ENCODE measurements at regions of chr14 and their contacts with region 1.

Region 1: DNA sequence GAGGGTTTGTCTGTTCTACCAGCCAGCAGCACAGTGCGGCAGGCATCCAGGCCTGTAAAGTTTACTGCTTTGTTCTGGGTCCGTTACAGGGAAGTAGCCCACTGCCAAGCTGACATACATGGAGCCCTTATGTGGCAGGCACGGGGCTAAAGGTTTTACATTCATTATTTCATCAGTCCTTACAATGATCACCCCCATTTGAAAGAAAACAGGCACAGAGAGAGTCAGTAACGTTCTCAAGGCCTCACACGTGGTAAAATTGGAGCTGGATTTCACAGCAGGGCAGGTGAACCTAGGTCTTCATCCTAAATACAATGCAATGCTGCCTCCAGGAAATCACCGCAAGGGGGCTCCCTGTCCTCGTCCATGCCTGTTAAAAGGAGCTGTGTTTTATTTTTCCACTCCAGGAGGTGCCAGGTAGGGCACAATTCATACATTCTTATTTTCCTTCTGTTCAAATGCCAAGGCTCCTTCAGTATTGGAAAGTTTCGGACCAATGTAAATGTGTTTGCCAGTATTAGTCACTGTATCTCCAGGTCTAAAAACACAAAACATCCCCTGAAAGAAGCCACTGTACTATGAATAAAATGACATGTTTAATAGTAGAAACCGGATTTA is 172.2 kb upstream of the GZMB start:
- DNase-seq: peak; percentile 16
- ATAC-seq: peak; percentile 89
- H3K4me3 ChIP-seq: no peak overlapping the region
- H3K27ac ChIP-seq: no peak overlapping the region
- H3K4me1 ChIP-seq: no peaks in the 10 kb centered on the region
- H3K27me3 ChIP-seq: no peaks in the 10 kb centered on the region
- CTCF ChIP-seq: peak; percentile 79 to 92 (median 82)
- EP300 ChIP-seq: no peak
- POLR2A ChIP-seq: no peak
- RAD21 ChIP-seq: peak; percentile 75

Region 2: DNA sequence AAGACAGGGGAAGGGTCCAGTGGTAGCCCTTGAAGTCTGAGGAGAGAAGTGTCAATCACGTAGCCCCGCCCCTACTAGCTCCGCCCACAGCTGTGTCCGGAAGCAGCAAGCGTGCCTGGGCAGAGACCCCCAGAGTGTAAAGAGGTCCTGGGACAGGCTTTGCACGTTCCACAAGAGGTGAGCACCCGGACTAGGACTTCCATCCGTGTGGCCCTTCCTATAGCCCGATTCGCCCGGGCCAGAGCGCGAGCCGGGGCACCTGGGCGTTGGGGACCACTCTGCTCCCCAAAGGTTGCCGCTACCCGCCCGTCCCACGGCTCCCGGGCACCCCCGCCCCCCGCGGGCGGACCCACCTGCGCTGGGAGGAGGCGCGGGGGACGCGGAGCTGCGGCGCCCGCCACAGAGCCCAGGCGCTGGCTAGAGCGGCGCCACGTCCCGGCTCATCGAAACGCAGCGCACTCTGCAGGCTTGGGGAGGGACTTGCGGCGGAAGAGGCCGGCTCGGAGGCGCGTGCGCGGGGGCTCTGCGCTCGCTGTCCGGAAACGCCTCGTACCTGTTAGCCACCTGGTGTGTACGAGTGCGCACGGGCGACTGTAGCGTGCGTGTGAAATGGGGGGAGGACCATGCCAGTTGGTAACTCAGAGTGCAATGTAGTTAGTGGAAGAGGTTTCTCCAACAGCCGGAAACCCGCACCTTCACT is 534.9 kb before region 1 on chr14 and contains the start of gene RABGGTA:
- CTCF ChIA-PET with region 1: no interaction called
- POLR2A ChIA-PET with region 1: no interaction called
- RAD21 ChIA-PET with region 1: no interaction called
- SMC1A ChIA-PET with region 1: no interaction called
- in situ Hi-C with region 1: no loop called
- intact Hi-C with region 1: no loop called
- DNase-seq: peak; percentile 80
- ATAC-seq: peak; percentile 89
- H3K4me3 ChIP-seq: peak within 1 kb of the TSS; percentile 88
- H3K27ac ChIP-seq: peak within 1 kb of the TSS; percentile 99
- H3K4me1 ChIP-seq: peaks cover 25% of the 10 kb centered on the region
- H3K27me3 ChIP-seq: no peaks in the 10 kb centered on the region
- CTCF ChIP-seq: peak; percentile 84 to 93 (median 86); a peak in 5 of 6 replicates
- EP300 ChIP-seq: no peak
- POLR2A ChIP-seq: peak; percentile 93
- RAD21 ChIP-seq: 0 out of 2 replicates have a peak, but pooled peaks have one; percentile 25
- polyA plus RNA-seq, gene RABGGTA: 38.2 to 38.6 TPM

Region 3: GRCh38 chr14:24398653-24399446 is 407.3 kb before region 1 on chr14 and contains the start of gene NYNRIN:
- CTCF ChIA-PET with region 1: no interaction called
- POLR2A ChIA-PET with region 1: no interaction called
- RAD21 ChIA-PET with region 1: no interaction called
- SMC1A ChIA-PET with region 1: no interaction called
- in situ Hi-C with region 1: no loop called
- intact Hi-C with region 1: no loop called
- DNase-seq: no peak
- ATAC-seq: peak; percentile 43
- H3K4me3 ChIP-seq: no peak within 1 kb of the TSS
- H3K27ac ChIP-seq: no peak within 1 kb of the TSS
- H3K4me1 ChIP-seq: no peaks in the 10 kb centered on the region
- H3K27me3 ChIP-seq: peaks cover 4 to 8% of the 10 kb centered on the region in 2 experiments
- CTCF ChIP-seq: no peak
- EP300 ChIP-seq: no peak
- POLR2A ChIP-seq: no peak
- RAD21 ChIP-seq: no peak
- polyA plus RNA-seq, gene NYNRIN: not detected

Region 4: DNA sequence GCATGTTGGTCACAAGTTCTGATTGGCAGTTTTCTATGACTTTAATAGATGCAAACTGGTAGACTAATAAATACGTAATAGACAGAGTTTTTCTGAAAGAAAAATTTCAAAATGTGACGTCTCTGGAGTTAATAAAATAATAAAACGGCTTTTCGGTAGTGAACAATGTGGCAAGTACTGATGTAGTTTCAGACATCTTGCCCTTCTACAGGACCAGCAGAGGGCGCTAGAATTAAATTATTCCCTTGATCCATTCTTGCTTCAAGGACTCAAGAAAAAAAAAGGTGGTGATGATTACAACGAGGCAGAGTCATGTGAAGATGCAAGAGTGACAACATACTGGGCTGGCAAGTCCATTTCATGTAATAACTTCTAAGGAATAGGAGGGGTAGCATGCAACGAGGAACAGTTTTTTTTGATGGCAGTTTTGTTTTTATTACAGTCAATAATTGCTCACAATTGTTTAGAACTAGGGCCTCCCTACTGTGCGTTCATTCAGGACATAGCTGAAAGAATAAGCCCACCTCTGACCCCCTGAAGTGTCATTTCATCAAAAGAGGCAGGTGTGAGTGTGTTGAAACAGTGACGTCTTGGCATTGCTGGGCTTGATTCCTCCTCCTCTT is 71.2 kb before region 1 on chr14:
- CTCF ChIA-PET with region 1: interaction called, 26 read pairs
- POLR2A ChIA-PET with region 1: no interaction called
- RAD21 ChIA-PET with region 1: interaction called, 17 read pairs
- SMC1A ChIA-PET with region 1: interaction called, 20 read pairs
- in situ Hi-C with region 1: no loop called
- intact Hi-C with region 1: loop called (anchors 5 kb)
- DNase-seq: no peak
- ATAC-seq: peak; percentile 93
- H3K4me3 ChIP-seq: no peak overlapping the region
- H3K27ac ChIP-seq: no peak overlapping the region
- H3K4me1 ChIP-seq: no peaks in the 10 kb centered on the region
- H3K27me3 ChIP-seq: no peaks in the 10 kb centered on the region
- CTCF ChIP-seq: peak; percentile 58 to 68 (median 67)
- EP300 ChIP-seq: no peak
- POLR2A ChIP-seq: no peak
- RAD21 ChIP-seq: peak; percentile 53

Region 5: DNA sequence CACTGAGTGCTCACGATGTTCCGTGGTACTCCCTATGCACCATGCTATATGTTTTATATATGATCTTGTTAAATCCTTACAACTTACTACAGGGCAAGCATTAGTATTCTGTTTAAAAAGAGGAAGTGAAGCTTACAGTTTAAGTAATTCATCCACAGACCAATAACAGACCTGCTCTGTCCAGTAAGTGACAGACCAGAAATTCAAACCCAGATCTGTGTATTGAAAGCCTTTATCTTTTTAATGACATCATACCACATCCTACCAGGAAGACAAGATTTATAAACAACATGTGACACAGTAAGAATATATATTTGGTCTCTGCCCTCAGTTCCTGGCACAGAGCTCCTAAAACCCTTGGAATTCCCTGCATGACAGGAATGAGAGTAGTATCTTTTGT is 37.3 kb after region 1 on chr14:
- CTCF ChIA-PET with region 1: interaction called, 5 read pairs
- POLR2A ChIA-PET with region 1: no interaction called
- RAD21 ChIA-PET with region 1: interaction called, 11 read pairs
- SMC1A ChIA-PET with region 1: interaction called, 19 read pairs
- in situ Hi-C with region 1: no loop called
- intact Hi-C with region 1: no loop called
- DNase-seq: peak; percentile 13
- ATAC-seq: peak; percentile 97
- H3K4me3 ChIP-seq: no peak overlapping the region
- H3K27ac ChIP-seq: no peak overlapping the region
- H3K4me1 ChIP-seq: no peaks in the 10 kb centered on the region
- H3K27me3 ChIP-seq: no peaks in the 10 kb centered on the region
- CTCF ChIP-seq: no peak
- EP300 ChIP-seq: peak; percentile 10 to 50; a peak in 2 of 4 replicates
- POLR2A ChIP-seq: no peak
- RAD21 ChIP-seq: no peak

Region 6: GRCh38 chr14:24952851-24953666 is 146.9 kb after region 1 on chr14:
- CTCF ChIA-PET with region 1: interaction called, 11 read pairs
- POLR2A ChIA-PET with region 1: no interaction called
- RAD21 ChIA-PET with region 1: interaction called, 16 read pairs
- SMC1A ChIA-PET with region 1: interaction called, 27 read pairs
- in situ Hi-C with region 1: no loop called
- intact Hi-C with region 1: loop called (anchors 10 kb)
- DNase-seq: no peak
- ATAC-seq: peak; percentile 32
- H3K4me3 ChIP-seq: no peak overlapping the region
- H3K27ac ChIP-seq: no peak overlapping the region
- H3K4me1 ChIP-seq: peaks cover 6% of the 10 kb centered on the region
- H3K27me3 ChIP-seq: no peaks in the 10 kb centered on the region
- CTCF ChIP-seq: peak in 2 of 3 experiments; percentile 10 to 30; a peak in 2 of 6 replicates
- EP300 ChIP-seq: no peak
- POLR2A ChIP-seq: no peak
- RAD21 ChIP-seq: no peak

Region 7: GRCh38 chr14:25032092-25032784 is 226.1 kb after region 1 on chr14:
- CTCF ChIA-PET with region 1: interaction called, 90 read pairs
- POLR2A ChIA-PET with region 1: interaction called, 7 read pairs
- RAD21 ChIA-PET with region 1: interaction called, 50 read pairs
- SMC1A ChIA-PET with region 1: interaction called, 49 read pairs
- in situ Hi-C with region 1: no loop called
- intact Hi-C with region 1: loop called (anchors 2 kb)
- DNase-seq: no peak
- ATAC-seq: peak; percentile 93
- H3K4me3 ChIP-seq: no peak overlapping the region
- H3K27ac ChIP-seq: no peak overlapping the region
- H3K4me1 ChIP-seq: no peaks in the 10 kb centered on the region
- H3K27me3 ChIP-seq: no peaks in the 10 kb centered on the region
- CTCF ChIP-seq: peak; percentile 51 to 80 (median 66)
- EP300 ChIP-seq: no peak; a peak in 1 of 4 replicates
- POLR2A ChIP-seq: no peak
- RAD21 ChIP-seq: no peak

Region 8: DNA sequence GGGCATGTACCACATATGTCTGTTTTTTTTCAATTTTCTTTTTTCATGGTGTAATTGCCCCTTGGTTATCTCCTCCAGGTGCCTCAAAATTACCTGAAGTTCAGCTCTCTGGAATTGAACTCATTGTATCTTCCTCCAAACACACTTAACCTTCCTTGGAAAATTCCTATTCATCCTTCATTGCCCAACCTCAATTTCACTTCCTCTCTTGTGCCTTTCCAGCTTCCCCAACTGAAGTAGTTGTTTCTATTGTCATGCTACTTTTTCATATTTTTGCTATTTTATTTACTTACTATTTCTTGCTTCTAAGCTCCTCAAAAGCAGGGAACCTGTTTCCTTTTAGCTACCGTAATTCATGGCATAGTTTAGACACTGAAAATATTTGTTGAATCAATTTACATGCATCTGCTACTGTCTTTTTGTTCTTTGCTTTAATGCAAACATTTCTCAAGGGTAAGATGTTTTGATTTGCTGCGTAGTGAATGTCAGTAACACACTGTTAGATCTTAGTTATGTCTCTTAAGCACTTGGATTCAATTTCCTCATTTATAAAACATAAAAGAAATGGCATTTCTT is 280.7 kb after region 1 on chr14:
- CTCF ChIA-PET with region 1: interaction called, 9 read pairs
- POLR2A ChIA-PET with region 1: interaction called, 10 read pairs
- RAD21 ChIA-PET with region 1: no interaction called
- SMC1A ChIA-PET with region 1: interaction called, 3 read pairs
- in situ Hi-C with region 1: no loop called
- intact Hi-C with region 1: no loop called
- DNase-seq: no peak
- ATAC-seq: no peak
- H3K4me3 ChIP-seq: no peak overlapping the region
- H3K27ac ChIP-seq: no peak overlapping the region
- H3K4me1 ChIP-seq: no peaks in the 10 kb centered on the region
- H3K27me3 ChIP-seq: no peaks in the 10 kb centered on the region
- CTCF ChIP-seq: no peak
- EP300 ChIP-seq: no peak
- POLR2A ChIP-seq: no peak
- RAD21 ChIP-seq: no peak